ENCODE measurements at regions of chr7 and their contacts with region 1.

Region 1: DNA sequence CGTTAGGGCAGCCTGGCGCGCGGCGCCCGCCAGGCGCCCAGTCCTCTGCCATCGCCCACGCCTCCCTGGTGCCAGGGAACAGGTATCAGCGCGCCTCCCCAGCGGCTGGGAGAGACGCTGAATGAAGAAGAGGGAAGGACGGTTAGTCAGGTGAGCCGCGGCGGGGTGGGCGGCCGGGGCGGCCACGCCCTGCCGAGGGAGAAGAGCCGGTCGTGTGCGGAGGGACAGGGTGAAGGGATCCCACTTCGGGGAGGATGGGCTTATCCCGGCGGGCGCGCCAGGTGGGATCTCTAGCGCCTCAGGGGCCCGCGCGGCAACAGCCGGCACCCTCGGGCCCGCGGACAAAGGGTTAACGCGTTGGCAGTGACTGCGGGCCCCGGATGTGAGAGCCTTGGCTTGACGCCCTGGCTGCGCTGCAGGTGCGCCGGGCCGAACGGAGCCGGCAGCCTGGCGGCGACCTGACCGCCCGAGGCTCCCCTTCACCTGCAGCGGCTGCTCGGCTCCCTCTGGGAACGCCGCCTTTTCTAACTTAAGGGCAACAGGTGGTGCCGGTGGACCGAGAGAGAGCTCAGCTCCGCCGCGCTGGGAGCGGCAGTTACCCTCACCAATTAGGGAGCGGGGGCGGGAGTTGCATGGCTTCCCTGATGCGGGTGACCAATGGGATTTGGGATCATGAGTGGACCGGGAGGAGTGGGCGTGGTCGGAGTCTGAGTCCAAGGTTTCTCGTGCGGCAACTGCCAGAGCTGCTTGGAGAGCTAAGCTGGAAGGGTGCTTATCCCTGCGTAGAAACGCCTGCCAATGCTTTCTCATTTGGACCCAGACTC is at the start of gene ARL4A:
- DNase-seq: peak; percentile 95
- ATAC-seq: peak; percentile 76
- H3K4me3 Mint-ChIP-seq: peak within 1 kb of the TSS; percentile 78
- H3K27ac Mint-ChIP-seq: peak within 1 kb of the TSS; percentile 93
- H3K4me1 Mint-ChIP-seq: peaks cover 30% of the 10 kb centered on the region
- H3K27me3 Mint-ChIP-seq: no peaks in the 10 kb centered on the region
- total RNA-seq, gene ARL4A: 7.5 to 10.4 TPM

Region 2: GRCh38 chr7:10939911-10940703 is 1747.0 kb before region 1 on chr7:
- CTCF ChIA-PET with region 1: no interaction called
- POLR2A ChIA-PET with region 1: no interaction called
- intact Hi-C with region 1: loop called in 1 of 2 experiments (anchors 1 kb)
- DNase-seq: peak; percentile 93
- ATAC-seq: peak; percentile 91
- H3K4me3 Mint-ChIP-seq: no peak overlapping the region
- H3K27ac Mint-ChIP-seq: no peak overlapping the region
- H3K4me1 Mint-ChIP-seq: peaks cover 35% of the 10 kb centered on the region
- H3K27me3 Mint-ChIP-seq: no peaks in the 10 kb centered on the region

Region 3: GRCh38 chr7:12257582-12257981 is 429.5 kb before region 1 on chr7:
- CTCF ChIA-PET with region 1: no interaction called
- POLR2A ChIA-PET with region 1: no interaction called
- intact Hi-C with region 1: loop called (anchors 5 kb)
- DNase-seq: peak; percentile 30
- ATAC-seq: peak; percentile 95
- H3K4me3 Mint-ChIP-seq: no peak overlapping the region
- H3K27ac Mint-ChIP-seq: no peak overlapping the region
- H3K4me1 Mint-ChIP-seq: peaks cover 8% of the 10 kb centered on the region
- H3K27me3 Mint-ChIP-seq: no peaks in the 10 kb centered on the region

Region 4: DNA sequence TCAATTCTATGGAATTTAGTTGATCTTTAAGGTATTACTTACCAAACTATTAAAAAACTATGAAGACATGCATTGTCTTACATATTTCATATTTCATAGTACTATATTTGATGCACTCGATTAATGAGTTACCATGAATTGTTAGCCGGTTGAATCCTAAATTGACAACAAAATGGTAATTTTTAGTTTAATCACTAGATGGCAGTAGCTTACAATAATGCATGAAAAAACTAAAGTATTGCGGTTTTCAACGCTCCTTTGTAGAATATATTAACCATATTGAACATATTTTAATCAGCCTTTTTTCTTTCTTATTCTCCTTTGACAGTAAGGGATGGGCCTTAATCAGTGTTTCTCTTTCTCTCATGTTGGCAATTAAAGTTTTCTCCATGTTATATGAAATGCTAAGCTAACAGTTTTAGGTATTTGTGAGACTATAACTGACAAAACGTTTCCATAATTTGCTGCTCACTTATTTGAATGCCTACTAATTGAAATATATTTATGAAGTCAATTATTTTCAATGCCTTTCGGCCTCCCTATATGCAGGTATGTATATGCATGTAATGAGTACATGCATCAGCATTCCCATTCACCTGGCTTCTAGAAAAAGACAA is 48.1 kb before region 1 on chr7:
- CTCF ChIA-PET with region 1: interaction called, 6 read pairs
- POLR2A ChIA-PET with region 1: interaction called, 3 read pairs
- intact Hi-C with region 1: loop called (anchors 2 to 5 kb)
- DNase-seq: no peak
- ATAC-seq: peak; percentile 50
- H3K4me3 Mint-ChIP-seq: no peak overlapping the region
- H3K27ac Mint-ChIP-seq: no peak overlapping the region
- H3K4me1 Mint-ChIP-seq: peaks cover 21% of the 10 kb centered on the region
- H3K27me3 Mint-ChIP-seq: no peaks in the 10 kb centered on the region

Region 5: DNA sequence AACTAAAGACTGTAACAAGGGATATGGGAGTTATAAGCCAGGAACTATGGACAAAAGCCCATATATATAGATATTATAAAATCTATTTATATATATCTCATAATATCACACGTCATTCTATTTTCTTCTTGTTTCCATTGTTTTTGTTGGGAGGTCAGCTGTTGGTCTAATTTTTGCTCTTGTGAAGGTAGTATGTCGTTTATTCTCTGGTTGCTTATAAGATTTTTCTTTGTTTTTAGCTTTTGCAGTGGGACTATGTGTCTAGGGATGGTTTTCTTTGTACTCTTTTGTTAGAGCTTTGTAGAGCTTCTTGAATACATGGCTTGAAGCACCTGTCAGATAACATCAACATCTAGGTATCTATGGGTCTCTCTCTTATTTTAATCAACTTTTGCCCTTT is 14.3 kb after region 1 on chr7:
- CTCF ChIA-PET with region 1: interaction called, 5 read pairs
- POLR2A ChIA-PET with region 1: interaction called, 11 read pairs
- intact Hi-C with region 1: no loop called
- DNase-seq: no peak
- ATAC-seq: no peak
- H3K4me3 Mint-ChIP-seq: no peak overlapping the region
- H3K27ac Mint-ChIP-seq: no peak overlapping the region
- H3K4me1 Mint-ChIP-seq: no peaks in the 10 kb centered on the region
- H3K27me3 Mint-ChIP-seq: no peaks in the 10 kb centered on the region

Region 6: DNA sequence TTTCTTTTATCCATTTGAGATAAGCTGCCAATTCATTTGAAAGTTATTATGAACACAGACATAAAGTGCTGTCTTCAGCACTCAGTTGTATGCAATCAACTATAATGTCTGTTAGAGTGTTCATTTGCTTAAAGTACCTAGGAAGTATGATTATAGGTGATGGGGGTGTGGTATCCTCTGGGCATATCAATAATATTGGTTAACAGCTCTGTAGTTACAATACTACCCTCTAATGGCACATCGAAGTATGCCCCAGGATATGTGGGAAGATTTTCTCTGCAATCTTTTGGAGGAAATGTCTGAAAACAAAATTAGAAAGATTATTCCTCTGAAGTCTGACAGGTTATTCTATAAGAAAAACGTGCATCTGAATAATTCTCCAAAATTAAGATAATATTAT is 430.0 kb after region 1 on chr7:
- CTCF ChIA-PET with region 1: no interaction called
- POLR2A ChIA-PET with region 1: no interaction called
- intact Hi-C with region 1: loop called in 1 of 2 experiments (anchors 2 kb)
- DNase-seq: no peak
- ATAC-seq: no peak
- H3K4me3 Mint-ChIP-seq: no peak overlapping the region
- H3K27ac Mint-ChIP-seq: no peak overlapping the region
- H3K4me1 Mint-ChIP-seq: no peaks in the 10 kb centered on the region
- H3K27me3 Mint-ChIP-seq: no peaks in the 10 kb centered on the region